ENCODE measurements at regions of chrX and their contacts with region 1.

Region 1: GRCh38 chrX:24024819-24025740 is 1.9 kb downstream of the KLHL15 start:
- DNase-seq: peak; percentile 68 to 92
- H3K4me3 ChIP-seq: peak overlapping the region; percentile 97
- H3K27ac ChIP-seq: peak overlapping the region; percentile 96
- H3K4me1 ChIP-seq: peaks cover 10% of the 10 kb centered on the region; the same call in 1 of the 2 replicates
- H3K27me3 ChIP-seq: no peaks in the 10 kb centered on the region
- CTCF ChIP-seq: no peak

Region 2: DNA sequence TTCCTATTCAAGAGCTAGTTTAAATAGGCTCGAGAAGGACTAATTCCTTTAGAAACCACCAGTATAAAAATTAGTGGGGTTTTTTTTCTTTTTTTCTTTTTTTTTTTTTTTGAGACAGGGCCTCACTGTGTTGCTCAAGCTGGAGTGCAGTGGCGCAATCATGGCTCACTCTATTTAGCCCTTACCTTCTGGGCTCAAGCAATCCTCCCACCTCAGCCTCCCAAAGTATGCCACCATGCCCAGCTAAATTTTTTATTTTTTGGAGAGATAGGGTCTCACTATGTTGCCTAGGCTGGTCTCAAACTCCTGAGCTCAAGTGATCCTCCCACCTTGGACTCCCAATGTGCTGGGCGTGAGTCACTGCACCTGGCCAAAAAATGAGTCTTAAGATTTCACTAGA is 170.1 kb before region 1 on chrX:
- CTCF ChIA-PET with region 1: no interaction called
- POLR2A ChIA-PET with region 1: interaction called, 10 read pairs
- intact Hi-C with region 1: no loop called
- DNase-seq: no peak
- H3K4me3 ChIP-seq: no peak overlapping the region
- H3K27ac ChIP-seq: no peak overlapping the region
- H3K4me1 ChIP-seq: no peaks in the 10 kb centered on the region
- H3K27me3 ChIP-seq: no peaks in the 10 kb centered on the region
- CTCF ChIP-seq: no peak

Region 3: DNA sequence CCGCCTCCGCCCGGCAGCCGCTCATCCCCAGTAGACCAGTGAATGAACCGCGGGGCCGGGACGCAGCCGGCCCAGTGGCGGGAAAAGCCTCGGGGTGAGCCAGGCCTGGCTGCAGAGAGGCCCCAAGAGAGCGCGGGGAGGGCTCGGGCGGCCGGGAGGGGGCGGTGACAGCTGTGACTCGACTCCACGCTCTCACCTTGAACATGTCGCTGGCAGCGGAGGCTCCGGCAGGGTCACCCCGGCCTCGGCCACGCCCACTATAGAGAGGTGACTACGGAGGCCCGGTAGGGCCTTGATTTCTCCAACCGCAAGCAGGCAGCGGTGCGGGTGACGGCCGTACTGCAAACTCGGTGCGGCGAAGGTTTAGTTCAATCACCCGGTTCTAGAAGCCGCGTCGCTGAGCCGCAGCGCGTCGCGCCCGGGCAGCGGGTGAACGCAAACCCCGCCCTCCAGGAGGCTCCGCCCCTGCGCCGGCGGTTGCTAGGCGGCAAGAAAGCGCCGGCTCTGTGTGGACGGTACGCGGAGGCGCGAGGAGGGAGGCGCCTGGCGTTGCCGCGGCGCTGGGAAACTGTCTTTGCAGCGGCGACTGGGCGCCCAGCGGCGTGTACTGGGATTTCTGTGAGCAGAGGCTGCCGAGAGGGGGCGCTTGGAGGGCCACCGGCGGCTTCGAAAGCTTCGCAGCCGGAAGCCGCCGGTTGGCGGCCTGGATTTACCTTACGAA is 117.4 kb before region 1 on chrX and contains the starts of genes APOO and CXorf58:
- CTCF ChIA-PET with region 1: no interaction called
- POLR2A ChIA-PET with region 1: no interaction called
- intact Hi-C with region 1: loop called (anchors 1 kb)
- DNase-seq: peak; percentile 82 to 93
- H3K4me3 ChIP-seq: peak within 1 kb of the TSS; percentile 79
- H3K27ac ChIP-seq: peak within 1 kb of the TSS; percentile 69
- H3K4me1 ChIP-seq: peaks cover 12% of the 10 kb centered on the region
- H3K27me3 ChIP-seq: no peaks in the 10 kb centered on the region
- CTCF ChIP-seq: peak; percentile 61
- total RNA-seq, gene APOO: 25.5 and 42.3 TPM in 2 replicates
- total RNA-seq, gene CXorf58: 0.20 TPM in 1 of 2 replicates, not detected in the other

Region 4: GRCh38 chrX:24100713-24101112 is 75.6 kb after region 1 on chrX:
- CTCF ChIA-PET with region 1: no interaction called
- POLR2A ChIA-PET with region 1: no interaction called
- intact Hi-C with region 1: no loop called
- DNase-seq: no peak
- H3K4me3 ChIP-seq: no peak overlapping the region
- H3K27ac ChIP-seq: no peak overlapping the region
- H3K4me1 ChIP-seq: no peaks in the 10 kb centered on the region; the same call in 1 of the 2 replicates
- H3K27me3 ChIP-seq: no peaks in the 10 kb centered on the region
- CTCF ChIP-seq: no peak

Region 5: DNA sequence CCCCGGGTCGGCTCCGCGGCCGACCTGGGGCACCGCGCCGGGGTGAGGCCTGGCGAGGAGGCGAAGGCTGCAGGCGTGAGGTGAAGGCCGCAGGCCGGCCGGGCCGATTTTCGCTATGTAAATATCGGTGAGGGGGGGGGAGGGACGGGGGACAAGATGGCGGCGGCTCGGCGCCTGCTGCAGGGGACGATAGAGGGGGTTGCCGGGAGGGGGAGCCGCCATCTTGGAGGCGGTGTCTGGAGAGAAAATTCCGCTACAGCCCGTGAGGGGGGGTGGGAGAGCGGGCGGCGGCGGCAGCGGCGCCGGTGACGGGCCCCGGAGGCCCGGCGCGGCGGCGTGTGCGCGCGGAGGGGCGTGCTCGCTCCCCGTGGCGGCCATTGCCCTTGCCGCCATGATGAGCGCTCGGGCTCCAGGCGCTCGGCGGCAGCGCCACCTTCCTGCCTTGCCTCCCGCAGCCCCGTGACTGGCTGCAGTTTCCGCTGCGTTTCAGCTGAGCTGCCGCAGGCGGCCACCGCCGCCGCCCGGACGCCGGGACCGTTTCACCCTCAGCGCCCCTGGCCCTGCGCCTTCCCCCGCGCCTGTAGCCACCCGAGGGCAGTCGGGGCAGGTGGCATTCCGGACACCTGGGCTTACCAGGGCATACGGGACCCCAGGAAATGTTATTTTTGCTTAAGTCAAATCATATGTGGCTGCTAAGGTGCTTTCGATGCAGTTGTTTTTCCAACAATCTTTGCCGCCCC is 125.1 kb after region 1 on chrX:
- CTCF ChIA-PET with region 1: no interaction called
- POLR2A ChIA-PET with region 1: no interaction called
- intact Hi-C with region 1: loop called (anchors 5 kb)
- DNase-seq: peak; percentile 61 to 77
- H3K4me3 ChIP-seq: peak overlapping the region; percentile 90
- H3K27ac ChIP-seq: peak overlapping the region; percentile 86
- H3K4me1 ChIP-seq: peaks cover 72% of the 10 kb centered on the region
- H3K27me3 ChIP-seq: no peaks in the 10 kb centered on the region
- CTCF ChIP-seq: peak; percentile 24; the same call in 1 of the 2 replicates

Measured in PC-9 (cell line).